B cell (primary cell): ENCODE measurements at regions of chr7 and their contacts with region 1.

Region 1: DNA sequence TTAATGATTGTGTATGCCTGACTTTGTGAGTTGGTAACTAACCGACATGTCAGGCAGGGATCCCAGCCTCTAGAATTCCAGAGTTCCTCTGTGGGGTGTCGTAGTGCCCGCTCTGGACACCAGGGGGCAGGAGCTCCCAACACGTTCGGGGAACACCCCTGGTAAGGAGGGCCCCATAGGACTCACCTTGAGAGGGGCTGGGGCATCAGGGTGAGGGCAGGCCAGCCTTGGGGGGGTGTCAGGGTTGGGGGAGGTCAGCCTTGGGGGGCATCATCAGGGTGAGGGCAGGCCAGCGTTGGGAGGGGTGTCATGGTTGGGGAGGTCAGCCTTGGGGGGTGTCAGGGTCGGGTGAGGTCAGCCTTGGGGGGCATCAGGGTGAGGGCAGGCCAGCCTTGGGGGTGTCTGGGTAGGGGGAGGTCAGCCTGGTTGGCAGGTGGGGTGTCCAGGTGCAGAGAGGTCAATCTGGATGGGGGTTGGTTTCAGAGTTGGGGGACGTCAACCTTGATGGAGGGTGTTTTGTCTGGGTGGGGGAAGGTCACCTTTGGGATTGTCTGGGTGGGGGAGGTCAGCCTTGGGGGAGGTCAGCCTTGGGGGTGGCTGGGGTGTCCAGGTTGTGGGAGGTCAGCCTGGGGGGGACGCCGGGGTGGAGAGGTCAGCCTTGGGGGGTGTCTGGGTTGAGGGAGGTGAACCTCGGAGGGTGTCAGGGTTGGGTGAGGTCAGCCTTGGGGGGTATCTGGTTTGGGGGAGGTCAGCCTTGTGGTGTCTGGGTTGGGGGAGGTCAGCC is 45.6 kb upstream of the SUN1 start:
- DNase-seq: peak; percentile 70
- ATAC-seq: peak; percentile 85
- H3K4me3 ChIP-seq: no peak overlapping the region
- H3K4me3 Mint-ChIP-seq: no peak overlapping the region
- H3K27ac ChIP-seq: no peak overlapping the region
- H3K27ac Mint-ChIP-seq: no peak overlapping the region
- H3K4me1 ChIP-seq: no peaks in the 10 kb centered on the region
- H3K4me1 Mint-ChIP-seq: no peaks in the 10 kb centered on the region
- H3K27me3 ChIP-seq: no peaks in the 10 kb centered on the region
- H3K27me3 Mint-ChIP-seq: no peaks in the 10 kb centered on the region
- CTCF ChIP-seq: peak; percentile 76

Region 2: GRCh38 chr7:691368-692040 is 95.2 kb before region 1 on chr7:
- CTCF ChIA-PET with region 1: no interaction called
- POLR2A ChIA-PET with region 1: no interaction called
- intact Hi-C with region 1: no loop called
- DNase-seq: no peak
- ATAC-seq: no peak
- H3K4me3 ChIP-seq: no peak overlapping the region
- H3K4me3 Mint-ChIP-seq: no peak overlapping the region
- H3K27ac ChIP-seq: no peak overlapping the region
- H3K27ac Mint-ChIP-seq: no peak overlapping the region
- H3K4me1 ChIP-seq: no peaks in the 10 kb centered on the region
- H3K4me1 Mint-ChIP-seq: no peaks in the 10 kb centered on the region
- H3K27me3 ChIP-seq: no peaks in the 10 kb centered on the region
- H3K27me3 Mint-ChIP-seq: no peaks in the 10 kb centered on the region
- CTCF ChIP-seq: no peak

Region 3: GRCh38 chr7:816300-816750 is 29.7 kb after region 1 on chr7:
- CTCF ChIA-PET with region 1: interaction called, 16 read pairs
- POLR2A ChIA-PET with region 1: no interaction called
- intact Hi-C with region 1: loop called (anchors 1 kb)
- DNase-seq: peak; percentile 97
- ATAC-seq: peak; percentile 92
- H3K4me3 ChIP-seq: peak overlapping the region in 4 of 5 experiments; percentile 49 to 71 (median 66)
- H3K4me3 Mint-ChIP-seq: peak overlapping the region; percentile 86
- H3K27ac ChIP-seq: no peak overlapping the region
- H3K27ac Mint-ChIP-seq: peak overlapping the region; percentile 73
- H3K4me1 ChIP-seq: peaks cover 29 to 43% of the 10 kb centered on the region in 2 donors
- H3K4me1 Mint-ChIP-seq: peaks cover 58% of the 10 kb centered on the region
- H3K27me3 ChIP-seq: no peaks in the 10 kb centered on the region
- H3K27me3 Mint-ChIP-seq: no peaks in the 10 kb centered on the region
- CTCF ChIP-seq: no peak

Region 4: GRCh38 chr7:836411-837400 is 50.0 kb after region 1 on chr7:
- CTCF ChIA-PET with region 1: interaction called, 3 read pairs
- POLR2A ChIA-PET with region 1: no interaction called
- intact Hi-C with region 1: loop called (anchors 1 kb)
- DNase-seq: no peak
- ATAC-seq: no peak
- H3K4me3 ChIP-seq: no peak overlapping the region
- H3K4me3 Mint-ChIP-seq: no peak overlapping the region
- H3K27ac ChIP-seq: no peak overlapping the region
- H3K27ac Mint-ChIP-seq: no peak overlapping the region
- H3K4me1 ChIP-seq: peaks cover 14% of the 10 kb centered on the region in 2 donors
- H3K4me1 Mint-ChIP-seq: peaks cover 28% of the 10 kb centered on the region
- H3K27me3 ChIP-seq: no peaks in the 10 kb centered on the region
- H3K27me3 Mint-ChIP-seq: no peaks in the 10 kb centered on the region
- CTCF ChIP-seq: no peak

Region 5: DNA sequence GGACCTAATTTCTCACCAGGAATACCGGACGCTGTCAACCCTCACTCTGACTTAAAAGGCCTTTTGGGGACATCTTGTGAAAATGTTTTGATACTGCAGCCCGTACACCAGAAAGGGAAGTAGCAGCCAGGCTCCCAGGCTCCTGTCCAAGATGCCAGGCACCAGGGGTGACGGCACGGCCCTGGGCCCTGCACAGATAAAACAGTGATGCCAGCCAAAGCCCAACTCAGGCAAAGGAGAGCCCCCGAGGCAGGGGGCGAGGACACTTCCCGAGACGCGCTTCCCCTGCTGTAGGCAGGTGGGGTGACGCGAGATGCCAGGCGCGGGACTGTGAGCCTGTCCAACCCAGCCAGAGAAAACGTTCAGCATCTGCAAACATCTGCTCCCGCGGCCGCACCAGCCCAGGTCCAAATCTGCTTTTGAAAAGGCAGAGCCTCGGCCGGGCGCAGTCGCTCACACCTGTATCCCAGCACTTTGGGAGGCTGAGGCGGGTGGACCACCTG is 357.7 kb after region 1 on chr7:
- CTCF ChIA-PET with region 1: interaction called, 5 read pairs
- POLR2A ChIA-PET with region 1: no interaction called
- intact Hi-C with region 1: loop called (anchors 5 kb)
- DNase-seq: peak; percentile 65
- ATAC-seq: peak; percentile 42
- H3K4me3 ChIP-seq: no peak overlapping the region
- H3K4me3 Mint-ChIP-seq: peak overlapping the region; percentile 75
- H3K27ac ChIP-seq: no peak overlapping the region
- H3K27ac Mint-ChIP-seq: peak overlapping the region; percentile 85
- H3K4me1 ChIP-seq: peaks cover 15 to 33% of the 10 kb centered on the region in 2 donors
- H3K4me1 Mint-ChIP-seq: peaks cover 32% of the 10 kb centered on the region
- H3K27me3 ChIP-seq: no peaks in the 10 kb centered on the region
- H3K27me3 Mint-ChIP-seq: no peaks in the 10 kb centered on the region
- CTCF ChIP-seq: peak; percentile 27